Left lung (tissue), 14 donors: ENCODE measurements at regions of chr16 and their contacts with region 1.

Region 1: DNA sequence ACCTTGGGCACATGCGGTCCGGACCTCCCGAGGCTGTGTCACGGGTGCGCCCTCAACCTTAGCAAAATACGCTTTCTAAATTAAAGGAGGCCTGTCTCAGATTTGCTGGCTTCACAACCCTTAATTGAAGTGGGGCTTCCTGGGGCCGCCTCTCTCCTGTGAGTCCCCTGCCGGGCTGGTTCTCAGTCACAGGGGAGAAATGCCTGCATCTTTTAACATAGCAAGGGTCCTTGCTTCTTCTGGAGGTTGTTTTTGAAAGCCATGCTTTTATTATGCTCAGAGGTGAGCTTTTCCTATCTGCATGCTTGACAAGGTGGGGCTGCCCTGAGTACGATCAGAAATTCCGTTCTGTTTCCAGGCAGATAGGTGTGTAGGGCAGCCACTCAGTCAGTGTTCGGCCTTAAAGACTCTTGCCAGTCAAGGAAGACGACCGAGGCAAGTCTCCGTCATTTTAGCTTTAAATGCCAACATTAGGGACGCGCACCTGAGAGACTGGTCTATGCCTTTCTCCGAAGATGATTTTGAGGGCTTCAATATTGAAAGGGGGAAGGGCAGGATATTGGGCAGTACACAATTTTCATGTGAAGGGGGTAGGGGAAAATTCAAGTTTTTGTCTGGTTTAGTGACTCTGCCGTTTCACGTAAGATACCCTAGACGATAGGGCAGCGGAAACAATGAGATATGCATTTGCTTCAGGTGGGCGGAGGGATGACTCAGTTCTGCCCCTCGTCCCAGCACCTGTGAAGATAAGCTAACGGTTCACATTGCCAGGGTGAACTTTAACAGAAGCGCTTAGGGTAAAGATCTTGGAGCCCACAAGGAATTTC is 5.5 kb upstream of the SLC7A5 start:
- DNase-seq: no peak
- ATAC-seq: no peak
- H3K4me3 ChIP-seq: no peak overlapping the region
- H3K27ac ChIP-seq: no peak overlapping the region
- H3K4me1 ChIP-seq: peaks cover 3 to 23% of the 10 kb centered on the region in 2 donors
- H3K27me3 ChIP-seq: peaks cover 4 to 41% of the 10 kb centered on the region in 2 donors
- CTCF ChIP-seq: no peak

Region 2: GRCh38 chr16:87778830-87779579 is 95.8 kb before region 1 on chr16:
- intact Hi-C with region 1: loop called in 1 of 2 experiments (anchors 5 kb)
- DNase-seq: peak; percentile 80 to 99 (median 92)
- ATAC-seq: peak; percentile 94
- H3K4me3 ChIP-seq: no peak overlapping the region
- H3K27ac ChIP-seq: peak overlapping the region in 1 of 2 donors; percentile 69
- H3K4me1 ChIP-seq: peaks cover 3 to 41% of the 10 kb centered on the region in 2 donors
- H3K27me3 ChIP-seq: peaks cover 0 to 23% of the 10 kb centered on the region in 2 donors
- CTCF ChIP-seq: peak; percentile 95 to 99